H1 (cell line): ENCODE measurements at regions of chr5 and their contacts with region 1.

Region 1: GRCh38 chr5:14644623-14645237 is 19.8 kb upstream of the OTULIN start:
- DNase-seq: no peak
- H3K4me3 ChIP-seq: no peak overlapping the region
- H3K27ac ChIP-seq: no peak overlapping the region
- H3K4me1 ChIP-seq: peaks cover 0 to 3% (median 0%) of the 10 kb centered on the region in 4 experiments; a peak in 2 of 7 replicates
- H3K27me3 ChIP-seq: no peaks in the 10 kb centered on the region
- CTCF ChIP-seq: no peak
- EP300 ChIP-seq: no peak
- POLR2A ChIP-seq: no peak
- RAD21 ChIP-seq: no peak

Region 2: DNA sequence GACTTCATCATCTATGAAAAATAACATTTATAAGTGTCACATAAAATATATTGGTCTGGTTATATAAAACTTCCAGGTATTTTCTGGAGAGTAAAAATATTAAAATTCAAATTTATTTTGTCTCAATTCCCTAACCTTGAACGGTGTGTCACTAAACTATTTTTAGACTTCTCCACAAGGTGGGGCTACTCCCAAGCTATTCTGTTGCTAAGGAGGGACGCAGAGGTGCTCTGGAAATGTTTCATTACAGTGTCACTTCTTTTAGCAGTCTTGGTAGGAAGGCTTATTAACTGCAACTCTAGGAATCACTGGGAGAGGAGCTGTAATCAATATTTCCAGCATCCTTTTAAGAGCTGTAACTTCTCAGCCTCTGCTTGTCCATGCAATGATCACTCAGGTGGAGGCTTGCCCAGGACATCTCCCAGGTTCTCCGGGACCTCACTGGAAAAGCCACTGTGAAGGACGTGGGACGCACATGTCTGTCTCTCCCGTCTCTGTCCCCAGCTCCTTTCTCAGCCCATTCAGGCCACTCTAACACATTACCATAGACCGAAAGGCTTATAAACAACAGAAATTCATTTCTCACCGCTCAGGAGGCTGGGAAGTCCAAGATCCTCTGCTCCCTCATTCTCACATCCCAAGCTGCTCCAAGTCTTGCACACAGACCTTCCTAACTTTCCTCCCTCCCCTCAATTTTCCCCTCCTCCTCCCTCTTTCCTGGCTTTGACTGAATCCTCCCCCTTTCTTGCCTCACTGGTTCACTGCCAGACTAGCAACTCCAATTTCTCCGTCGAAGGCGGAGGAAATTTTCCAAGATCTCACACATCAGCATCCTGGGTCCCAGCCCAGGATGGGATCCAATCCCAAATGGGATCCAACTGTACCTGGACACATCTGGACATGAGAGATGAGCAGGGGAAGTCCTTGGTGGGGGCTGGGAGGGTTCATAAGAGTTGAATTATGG is 667.6 kb before region 1 on chr5:
- CTCF ChIA-PET with region 1: interaction called, 28 read pairs
- POLR2A ChIA-PET with region 1: no interaction called
- DNase-seq: no peak
- H3K4me3 ChIP-seq: no peak overlapping the region
- H3K27ac ChIP-seq: no peak overlapping the region
- H3K4me1 ChIP-seq: no peaks in the 10 kb centered on the region
- H3K27me3 ChIP-seq: no peaks in the 10 kb centered on the region
- CTCF ChIP-seq: peak in 2 of 3 experiments; percentile 35 to 59; a peak in 2 of 4 replicates
- EP300 ChIP-seq: no peak
- POLR2A ChIP-seq: no peak
- RAD21 ChIP-seq: peak; percentile 83 to 85

Region 3: GRCh38 chr5:14326035-14326903 is 318.5 kb before region 1 on chr5:
- CTCF ChIA-PET with region 1: interaction called, 10 read pairs
- POLR2A ChIA-PET with region 1: no interaction called
- DNase-seq: no peak
- H3K4me3 ChIP-seq: no peak overlapping the region
- H3K27ac ChIP-seq: no peak overlapping the region
- H3K4me1 ChIP-seq: peaks cover 0 to 12% (median 1%) of the 10 kb centered on the region in 4 experiments; a peak in 3 of 7 replicates
- H3K27me3 ChIP-seq: no peaks in the 10 kb centered on the region
- CTCF ChIP-seq: peak; percentile 50 to 75 (median 59)
- EP300 ChIP-seq: no peak
- POLR2A ChIP-seq: no peak
- RAD21 ChIP-seq: peak; percentile 74 to 82

Region 4: GRCh38 chr5:14379739-14380497 is 264.8 kb before region 1 on chr5:
- CTCF ChIA-PET with region 1: no interaction called
- POLR2A ChIA-PET with region 1: no interaction called
- DNase-seq: peak in 1 of 2 experiments; percentile 90
- H3K4me3 ChIP-seq: no peak overlapping the region
- H3K27ac ChIP-seq: no peak overlapping the region
- H3K4me1 ChIP-seq: peaks cover 0 to 7% (median 1%) of the 10 kb centered on the region in 4 experiments; a peak in 3 of 7 replicates
- H3K27me3 ChIP-seq: no peaks in the 10 kb centered on the region
- CTCF ChIP-seq: no peak
- EP300 ChIP-seq: no peak
- POLR2A ChIP-seq: no peak
- RAD21 ChIP-seq: no peak

Region 5: GRCh38 chr5:14472986-14473567 is 171.7 kb before region 1 on chr5:
- CTCF ChIA-PET with region 1: interaction called, 10 read pairs
- POLR2A ChIA-PET with region 1: no interaction called
- DNase-seq: no peak
- H3K4me3 ChIP-seq: no peak overlapping the region
- H3K27ac ChIP-seq: no peak overlapping the region
- H3K4me1 ChIP-seq: no peaks in the 10 kb centered on the region
- H3K27me3 ChIP-seq: peaks cover 0 to 2% (median 0%) of the 10 kb centered on the region in 4 experiments; a peak in 1 of 7 replicates
- CTCF ChIP-seq: no peak
- EP300 ChIP-seq: no peak
- POLR2A ChIP-seq: no peak
- RAD21 ChIP-seq: no peak

Region 6: GRCh38 chr5:14545308-14545707 is 99.4 kb before region 1 on chr5:
- CTCF ChIA-PET with region 1: interaction called, 12 read pairs
- POLR2A ChIA-PET with region 1: interaction called, 3 read pairs
- DNase-seq: no peak
- H3K4me3 ChIP-seq: no peak overlapping the region
- H3K27ac ChIP-seq: no peak overlapping the region
- H3K4me1 ChIP-seq: no peaks in the 10 kb centered on the region
- H3K27me3 ChIP-seq: no peaks in the 10 kb centered on the region
- CTCF ChIP-seq: no peak
- EP300 ChIP-seq: no peak
- POLR2A ChIP-seq: no peak
- RAD21 ChIP-seq: no peak

Region 7: DNA sequence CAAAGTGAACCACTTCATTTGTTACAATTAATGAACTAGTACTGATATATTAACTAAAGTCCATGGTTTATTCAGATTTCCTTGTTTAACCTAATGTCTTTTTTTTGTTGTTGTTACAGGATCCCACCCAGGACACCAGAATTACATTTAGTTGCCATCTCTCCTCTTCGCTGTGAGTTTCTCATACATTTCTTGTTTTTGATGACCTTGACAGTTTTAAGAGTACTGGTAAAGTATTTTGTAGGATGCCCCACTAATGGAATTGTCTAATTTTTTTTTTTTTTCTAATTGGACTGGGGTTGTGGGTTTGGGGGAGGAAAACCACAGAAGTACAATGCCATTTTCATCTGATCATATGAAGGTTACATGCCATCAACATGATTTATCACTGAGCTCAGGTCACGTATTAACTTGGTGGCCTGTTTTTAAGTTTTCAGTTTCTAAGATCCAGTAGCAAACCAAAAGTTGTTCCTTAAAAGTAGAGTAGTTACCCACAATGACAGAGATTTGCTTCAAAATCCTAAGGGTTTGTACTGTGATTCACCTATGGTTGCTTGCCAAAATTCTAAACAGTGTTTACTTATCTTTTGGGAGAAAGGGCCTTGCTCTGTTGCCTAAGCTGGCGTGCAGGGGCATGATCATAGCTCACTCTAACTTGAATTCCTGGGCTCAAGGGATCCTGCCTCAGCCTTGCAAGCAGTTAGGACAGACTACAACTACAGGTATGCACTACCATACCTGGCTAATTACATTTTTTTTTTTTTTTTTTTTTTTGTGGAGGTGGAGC is 15.3 kb after region 1 on chr5:
- CTCF ChIA-PET with region 1: interaction called, 12 read pairs
- POLR2A ChIA-PET with region 1: no interaction called
- DNase-seq: no peak
- H3K4me3 ChIP-seq: no peak overlapping the region
- H3K27ac ChIP-seq: no peak overlapping the region
- H3K4me1 ChIP-seq: peaks cover 0 to 5% (median 2%) of the 10 kb centered on the region in 4 experiments; a peak in 4 of 7 replicates
- H3K27me3 ChIP-seq: peaks cover 0 to 14% (median 11%) of the 10 kb centered on the region in 4 experiments; a peak in 6 of 7 replicates
- CTCF ChIP-seq: no peak
- EP300 ChIP-seq: no peak
- POLR2A ChIP-seq: no peak
- RAD21 ChIP-seq: no peak